Activated CD4-positive, alpha-beta memory T cell treated with anti-CD3 and anti-CD28 coated beads for 36 hours (primary cell): ENCODE measurements at regions of chrX and their contacts with region 1.

Region 1: GRCh38 chrX:19554786-19555185 is 39.5 kb upstream of the MAP3K15 start:
- DNase-seq: peak; percentile 59
- H3K4me3 Mint-ChIP-seq: no peak overlapping the region
- H3K27ac Mint-ChIP-seq: peak overlapping the region; percentile 73
- H3K4me1 Mint-ChIP-seq: peaks cover 62% of the 10 kb centered on the region
- H3K27me3 Mint-ChIP-seq: no peaks in the 10 kb centered on the region

Region 2: DNA sequence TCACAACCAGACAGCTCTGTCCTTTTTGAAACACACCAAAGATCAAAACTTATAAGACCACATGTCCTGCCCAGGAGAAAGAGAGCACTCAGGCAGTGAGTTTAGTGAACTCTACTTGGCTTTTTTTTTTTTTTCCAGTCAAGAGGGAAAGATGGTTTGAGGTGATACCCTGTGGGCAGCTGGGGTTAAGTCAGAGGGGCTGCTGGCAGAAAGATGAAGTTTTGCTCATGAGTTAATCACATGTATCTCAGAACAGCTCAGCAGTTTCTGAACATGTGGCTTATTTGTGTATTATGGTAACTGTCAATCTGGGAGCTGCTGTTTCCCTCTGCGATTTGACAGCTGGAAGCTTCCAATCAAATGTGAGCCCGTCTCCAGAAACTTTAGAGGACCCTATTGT is 16.9 kb after region 1 on chrX:
- CTCF ChIA-PET with region 1: interaction called, 4 read pairs
- POLR2A ChIA-PET with region 1: interaction called, 6 read pairs
- intact Hi-C with region 1: loop called (anchors 1 kb)
- DNase-seq: peak; percentile 59
- H3K4me3 Mint-ChIP-seq: no peak overlapping the region
- H3K27ac Mint-ChIP-seq: peak overlapping the region; percentile 70
- H3K4me1 Mint-ChIP-seq: peaks cover 46% of the 10 kb centered on the region
- H3K27me3 Mint-ChIP-seq: no peaks in the 10 kb centered on the region

Region 3: GRCh38 chrX:19625612-19626011 is 70.8 kb after region 1 on chrX:
- CTCF ChIA-PET with region 1: no interaction called
- POLR2A ChIA-PET with region 1: no interaction called
- intact Hi-C with region 1: loop called (anchors 2 kb)
- DNase-seq: peak; percentile 80
- H3K4me3 Mint-ChIP-seq: no peak overlapping the region
- H3K27ac Mint-ChIP-seq: peak overlapping the region; percentile 91
- H3K4me1 Mint-ChIP-seq: peaks cover 74% of the 10 kb centered on the region
- H3K27me3 Mint-ChIP-seq: no peaks in the 10 kb centered on the region

Region 4: DNA sequence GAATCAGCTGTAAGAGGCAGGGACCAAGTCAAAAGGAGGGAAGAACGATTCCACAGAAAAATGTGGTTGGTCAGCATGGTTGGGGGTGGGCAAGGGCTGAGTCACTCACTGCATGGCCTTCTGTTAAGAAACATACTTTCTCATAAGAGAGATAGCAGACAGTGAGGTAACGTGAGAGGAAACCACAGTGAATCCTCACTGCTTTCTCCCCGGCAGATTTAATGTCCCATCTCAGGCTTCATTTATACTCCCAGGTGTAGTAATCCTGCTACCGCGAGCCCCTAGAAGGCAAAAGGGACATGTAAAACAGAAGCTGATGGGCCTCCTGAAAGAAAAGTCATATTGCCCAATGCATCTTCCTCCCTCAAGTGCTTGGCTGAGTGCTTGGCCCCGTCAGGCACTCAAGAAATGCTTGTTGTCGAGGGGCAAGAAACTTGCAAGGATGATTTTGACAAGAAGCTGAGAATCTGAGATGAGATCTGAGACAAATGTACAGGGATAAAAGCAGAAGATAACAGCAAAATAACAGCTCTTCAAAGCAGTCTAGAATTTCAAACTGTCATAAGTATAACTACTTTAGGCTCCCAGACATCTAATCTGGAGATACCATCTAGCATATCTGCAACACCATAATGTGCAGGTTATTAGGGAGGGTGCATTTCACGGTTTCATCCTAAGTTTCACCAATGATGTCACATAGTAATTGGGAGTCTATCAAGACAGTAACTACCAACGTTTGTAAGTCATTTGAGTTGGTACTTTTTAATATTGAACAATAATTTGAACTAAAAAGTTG is 292.4 kb after region 1 on chrX:
- CTCF ChIA-PET with region 1: interaction called, 3 read pairs
- POLR2A ChIA-PET with region 1: no interaction called
- intact Hi-C with region 1: loop called (anchors 5 kb)
- DNase-seq: peak; percentile 66
- H3K4me3 Mint-ChIP-seq: peak overlapping the region; percentile 52
- H3K27ac Mint-ChIP-seq: peak overlapping the region; percentile 91
- H3K4me1 Mint-ChIP-seq: peaks cover 51% of the 10 kb centered on the region
- H3K27me3 Mint-ChIP-seq: no peaks in the 10 kb centered on the region